PC-9 (cell line): ENCODE measurements at regions of chr1 and their contacts with region 1.

Region 1: GRCh38 chr1:10679496-10680220 is 116.8 kb downstream of the CASZ1 start:
- DNase-seq: peak in 1 of 2 experiments; percentile 49
- H3K4me3 ChIP-seq: no peak overlapping the region
- H3K27ac ChIP-seq: no peak overlapping the region
- H3K4me1 ChIP-seq: no peaks in the 10 kb centered on the region
- H3K27me3 ChIP-seq: no peaks in the 10 kb centered on the region
- CTCF ChIP-seq: no peak

Region 2: DNA sequence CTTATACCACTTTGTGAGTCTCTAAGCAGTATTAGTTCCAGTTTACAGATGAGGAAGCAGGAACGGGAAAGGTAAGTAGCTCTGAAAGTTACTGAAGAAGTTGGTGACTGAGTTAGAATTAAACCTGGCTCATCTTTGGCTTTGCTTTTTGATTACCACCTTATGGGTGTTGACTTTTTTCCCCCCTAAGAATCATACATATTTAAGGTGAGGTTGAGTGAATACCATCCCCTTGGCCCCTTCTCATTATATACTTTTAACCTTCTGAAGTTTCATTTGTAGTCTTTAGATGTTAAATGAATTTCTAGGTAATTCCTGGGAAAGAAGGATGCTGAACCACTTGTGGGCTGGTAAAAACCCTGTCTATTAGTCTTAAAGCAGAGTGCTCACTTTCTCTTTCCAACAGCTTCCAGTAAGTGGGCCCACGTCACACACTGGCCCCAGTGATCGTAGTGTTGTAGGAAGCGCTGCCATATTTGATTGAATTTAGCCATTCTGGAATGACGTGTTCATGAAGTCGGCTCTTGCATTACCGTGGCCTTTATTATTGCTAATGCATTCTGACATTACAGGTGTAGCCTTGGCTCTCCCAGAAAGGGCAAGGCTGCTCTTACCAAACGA is 158.0 kb before region 1 on chr1:
- CTCF ChIA-PET with region 1: no interaction called
- POLR2A ChIA-PET with region 1: interaction called, 16 read pairs
- intact Hi-C with region 1: no loop called
- DNase-seq: no peak
- H3K4me3 ChIP-seq: no peak overlapping the region
- H3K27ac ChIP-seq: no peak overlapping the region
- H3K4me1 ChIP-seq: peaks cover 12% of the 10 kb centered on the region
- H3K27me3 ChIP-seq: no peaks in the 10 kb centered on the region
- CTCF ChIP-seq: no peak

Region 3: GRCh38 chr1:10598389-10598702 is 81.3 kb before region 1 on chr1:
- CTCF ChIA-PET with region 1: no interaction called
- POLR2A ChIA-PET with region 1: no interaction called
- intact Hi-C with region 1: no loop called
- DNase-seq: no peak
- H3K4me3 ChIP-seq: no peak overlapping the region
- H3K27ac ChIP-seq: peak overlapping the region; percentile 92
- H3K4me1 ChIP-seq: peaks cover 24% of the 10 kb centered on the region
- H3K27me3 ChIP-seq: no peaks in the 10 kb centered on the region
- CTCF ChIP-seq: no peak

Region 4: DNA sequence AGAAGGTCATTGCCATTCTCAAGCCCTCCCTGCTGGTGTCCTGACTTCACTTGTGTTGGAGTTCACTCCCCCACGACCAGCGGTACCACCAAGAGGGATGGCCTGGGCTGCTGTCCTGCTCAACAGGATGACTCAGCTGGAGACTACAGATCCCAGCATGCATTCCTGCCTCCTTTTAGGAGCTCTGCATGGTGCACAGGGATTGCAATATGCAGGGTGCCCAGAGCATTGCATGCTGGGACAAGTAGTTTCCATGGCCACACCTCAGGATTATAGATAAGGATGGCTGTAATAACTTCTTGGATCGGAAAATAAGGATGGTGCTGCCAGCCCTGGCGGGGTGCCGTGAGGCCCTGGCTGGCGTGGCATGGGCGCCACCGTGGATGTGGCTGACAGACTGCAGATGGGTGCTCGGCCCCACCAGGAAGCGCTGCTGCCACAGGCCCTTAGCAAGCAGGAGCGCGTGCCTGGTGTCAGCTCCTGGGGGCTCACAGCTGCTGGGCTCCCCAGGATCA is 33.3 kb before region 1 on chr1:
- CTCF ChIA-PET with region 1: no interaction called
- POLR2A ChIA-PET with region 1: no interaction called
- intact Hi-C with region 1: no loop called
- DNase-seq: peak in 1 of 2 experiments; percentile 35
- H3K4me3 ChIP-seq: no peak overlapping the region
- H3K27ac ChIP-seq: no peak overlapping the region
- H3K4me1 ChIP-seq: no peaks in the 10 kb centered on the region
- H3K27me3 ChIP-seq: no peaks in the 10 kb centered on the region
- CTCF ChIP-seq: no peak